Panc1 (cell line): ENCODE measurements at regions of chr17 and their contacts with region 1.

Region 1: DNA sequence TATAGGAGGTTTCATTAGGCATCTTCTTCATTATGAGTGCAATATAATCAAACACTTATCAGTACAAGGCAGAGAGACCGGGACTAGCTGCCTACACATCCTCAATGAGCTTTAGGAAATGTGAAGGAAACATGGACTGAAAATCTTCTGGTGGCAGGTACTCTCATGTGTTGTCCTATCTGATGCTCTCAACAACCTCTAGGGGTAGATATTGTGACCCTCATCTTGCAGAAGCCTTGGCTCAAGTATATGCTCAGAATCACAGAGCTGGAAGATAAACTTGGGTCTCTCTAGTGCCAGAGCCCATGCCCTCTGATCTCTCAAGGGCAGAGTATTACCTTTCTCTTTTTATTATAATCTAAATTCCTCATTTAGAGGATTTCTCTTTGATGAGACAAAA is 181.6 kb upstream of the C17orf78 start:
- DNase-seq: no peak
- ATAC-seq: no peak
- H3K4me3 ChIP-seq: no peak overlapping the region
- H3K27ac ChIP-seq: no peak overlapping the region
- H3K4me1 ChIP-seq: no peaks in the 10 kb centered on the region
- H3K27me3 ChIP-seq: no peaks in the 10 kb centered on the region
- CTCF ChIP-seq: no peak; the same call in 1 of the 2 replicates

Region 2: DNA sequence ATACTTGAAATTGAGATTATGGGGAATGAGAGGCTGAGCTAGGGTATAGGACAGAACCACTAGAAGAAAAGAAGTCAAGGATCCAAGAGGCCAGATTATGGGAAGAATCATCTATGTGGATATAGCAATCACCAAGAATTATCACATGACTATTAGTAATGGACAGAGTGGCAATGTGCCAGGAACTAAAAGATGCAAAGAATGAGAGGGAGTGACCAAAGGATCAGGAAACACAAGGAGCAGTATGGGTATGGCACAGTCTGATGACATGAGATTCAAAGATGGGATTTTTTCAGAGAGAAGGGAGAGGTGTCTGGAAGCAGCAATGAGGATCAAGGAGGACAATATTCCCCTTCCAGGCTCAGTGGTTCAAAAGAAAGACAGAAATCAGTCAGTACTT is 33.3 kb before region 1 on chr17:
- CTCF ChIA-PET with region 1: no interaction called
- POLR2A ChIA-PET with region 1: interaction called, 11 read pairs
- in situ Hi-C with region 1: no loop called
- intact Hi-C with region 1: no loop called
- DNase-seq: no peak
- ATAC-seq: no peak
- H3K4me3 ChIP-seq: no peak overlapping the region
- H3K27ac ChIP-seq: no peak overlapping the region
- H3K4me1 ChIP-seq: no peaks in the 10 kb centered on the region
- H3K27me3 ChIP-seq: no peaks in the 10 kb centered on the region
- CTCF ChIP-seq: no peak